ENCODE measurements at regions of chr5 and their contacts with region 1.

Region 1: DNA sequence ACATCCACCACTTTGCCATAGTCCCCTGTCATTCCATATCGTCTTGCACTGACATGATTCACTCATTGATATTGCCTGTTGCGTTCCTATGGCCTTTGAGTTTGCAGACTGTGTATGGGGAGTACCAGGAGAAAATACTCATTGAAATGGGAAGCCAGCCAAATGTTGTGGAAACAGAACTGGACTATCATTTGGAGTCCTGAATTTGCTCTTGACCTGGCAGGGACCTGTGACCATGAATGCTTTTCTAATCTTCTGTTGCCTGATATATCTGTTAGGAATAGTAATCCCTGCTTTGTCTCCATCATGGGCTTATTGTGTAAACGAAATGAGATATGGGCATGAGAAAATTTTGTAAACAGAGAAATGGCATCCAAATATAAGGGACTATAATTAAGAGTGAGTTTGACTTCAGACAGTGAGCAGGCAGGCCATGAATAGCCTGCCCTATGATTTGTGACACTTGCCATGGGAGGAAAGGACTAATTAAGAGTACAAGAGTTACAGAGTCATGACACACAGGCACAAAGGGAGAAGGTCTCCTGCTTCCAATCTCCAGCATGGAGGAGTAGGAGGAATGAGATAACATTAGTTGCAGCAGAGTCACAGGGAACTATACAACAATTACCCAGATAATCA is 572.9 kb upstream of the SGCD start:
- DNase-seq: no peak

Region 2: GRCh38 chr5:155167736-155168135 is 586.3 kb before region 1 on chr5:
- intact Hi-C with region 1: no loop called
- DNase-seq: no peak

Region 3: GRCh38 chr5:155711882-155712281 is 42.2 kb before region 1 on chr5:
- intact Hi-C with region 1: no loop called
- DNase-seq: no peak

Region 4: DNA sequence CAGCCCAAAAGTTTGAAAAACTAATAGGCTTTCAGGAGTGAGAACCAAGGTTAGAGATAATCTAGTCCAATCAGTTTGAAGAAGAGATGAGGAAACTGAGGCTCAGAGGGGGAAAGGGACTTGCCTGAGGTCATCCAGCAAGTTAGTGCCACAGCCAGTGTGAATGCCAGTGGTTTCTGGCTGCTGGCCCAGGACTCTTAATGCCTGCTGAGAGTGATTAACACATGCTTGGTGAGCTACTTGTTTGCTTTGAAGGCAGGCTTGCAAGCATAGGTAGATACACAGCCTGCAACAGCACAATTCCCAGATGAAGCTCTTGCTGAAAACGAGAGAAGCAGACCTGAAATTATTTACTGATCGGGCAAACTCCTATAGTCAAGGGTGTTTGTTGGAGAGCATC is 18.7 kb before region 1 on chr5:
- intact Hi-C with region 1: loop called (anchors 2 kb)
- DNase-seq: no peak